HepG2 (cell line): ENCODE measurements at regions of chr13 and their contacts with region 1.

Region 1: GRCh38 chr13:112596235-112596634 is 8.3 kb upstream of the TUBGCP3 start:
- DNase-seq: no peak
- ATAC-seq: no peak
- H3K4me3 ChIP-seq: no peak overlapping the region
- H3K27ac ChIP-seq: no peak overlapping the region
- H3K4me1 ChIP-seq: peaks cover 8% of the 10 kb centered on the region; the same call in 1 of the 2 replicates
- H3K27me3 ChIP-seq: peaks cover 0 to 18% of the 10 kb centered on the region in 2 experiments; a peak in 3 of 5 replicates
- CTCF ChIP-seq: no peak
- EP300 ChIP-seq: no peak
- POLR2A ChIP-seq: no peak
- RAD21 ChIP-seq: no peak

Region 2: GRCh38 chr13:112545856-112546255 is 50.4 kb before region 1 on chr13:
- CTCF ChIA-PET with region 1: no interaction called
- POLR2A ChIA-PET with region 1: no interaction called
- in situ Hi-C with region 1: no loop called
- intact Hi-C with region 1: no loop called
- DNase-seq: no peak
- ATAC-seq: peak; percentile 25; the same call in 1 of the 3 replicates
- H3K4me3 ChIP-seq: no peak overlapping the region
- H3K27ac ChIP-seq: no peak overlapping the region
- H3K4me1 ChIP-seq: no peaks in the 10 kb centered on the region
- H3K27me3 ChIP-seq: no peaks in the 10 kb centered on the region
- CTCF ChIP-seq: no peak
- EP300 ChIP-seq: no peak
- POLR2A ChIP-seq: no peak
- RAD21 ChIP-seq: no peak

Region 3: GRCh38 chr13:112561478-112561877 is 34.8 kb before region 1 on chr13:
- CTCF ChIA-PET with region 1: no interaction called
- POLR2A ChIA-PET with region 1: no interaction called
- in situ Hi-C with region 1: no loop called
- intact Hi-C with region 1: loop called (anchors 5 kb)
- DNase-seq: no peak
- ATAC-seq: no peak
- H3K4me3 ChIP-seq: no peak overlapping the region
- H3K27ac ChIP-seq: no peak overlapping the region
- H3K4me1 ChIP-seq: peaks cover 9% of the 10 kb centered on the region
- H3K27me3 ChIP-seq: no peaks in the 10 kb centered on the region
- CTCF ChIP-seq: no peak
- EP300 ChIP-seq: no peak
- POLR2A ChIP-seq: no peak
- RAD21 ChIP-seq: no peak